Caco-2 (cell line): ENCODE measurements at regions of chr19 and their contacts with region 1.

Region 1: GRCh38 chr19:49640113-49640898 is at the start of gene RRAS:
- DNase-seq: peak; percentile 100
- H3K4me3 ChIP-seq: peak within 1 kb of the TSS; percentile 59
- H3K4me3 Mint-ChIP-seq: peak within 1 kb of the TSS; percentile 91
- H3K27ac Mint-ChIP-seq: peak within 1 kb of the TSS; percentile 100
- H3K4me1 ChIP-seq: peaks cover 7% of the 10 kb centered on the region
- H3K4me1 Mint-ChIP-seq: peaks cover 43% of the 10 kb centered on the region
- H3K27me3 ChIP-seq: no peaks in the 10 kb centered on the region
- H3K27me3 Mint-ChIP-seq: no peaks in the 10 kb centered on the region
- CTCF ChIP-seq: no peak
- total RNA-seq, gene RRAS: 10.6 and 11.3 TPM in 2 replicates

Region 2: DNA sequence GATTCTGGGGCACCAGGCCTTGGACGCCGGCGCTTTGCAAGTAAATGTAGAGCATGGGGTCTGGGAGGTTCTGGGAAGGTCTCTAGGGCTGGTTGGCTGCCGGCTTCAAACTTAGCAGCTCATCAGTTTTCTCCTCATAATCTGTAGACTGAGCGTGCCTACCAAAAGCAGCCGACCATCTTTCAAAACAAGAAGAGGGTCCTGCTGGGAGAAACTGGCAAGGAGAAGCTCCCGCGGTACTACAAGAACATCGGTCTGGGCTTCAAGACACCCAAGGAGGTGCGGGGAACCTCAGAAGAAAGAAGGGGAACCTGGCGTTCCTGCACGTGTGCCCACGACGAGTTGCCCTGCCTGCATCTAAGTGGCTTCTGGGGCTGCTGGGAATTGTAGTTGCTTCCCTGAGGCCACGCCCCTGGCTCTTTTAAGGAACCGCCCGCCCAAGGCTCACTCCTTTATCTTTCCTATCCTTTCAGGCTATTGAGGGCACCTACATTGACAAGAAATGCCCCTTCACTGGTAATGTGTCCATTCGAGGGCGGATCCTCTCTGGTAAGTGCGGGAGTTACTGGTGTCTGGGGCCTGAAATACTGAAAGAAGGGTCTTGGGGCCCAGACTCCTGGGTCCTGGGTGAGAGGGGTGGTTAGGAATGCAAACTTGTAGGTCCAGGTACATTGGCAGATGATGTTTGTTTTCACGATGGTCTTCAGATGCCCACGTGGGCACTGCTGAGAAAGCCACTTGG is 143.1 kb before region 1 on chr19:
- CTCF ChIA-PET with region 1: interaction called, 3 read pairs
- POLR2A ChIA-PET with region 1: interaction called, 22 read pairs
- intact Hi-C with region 1: loop called (anchors 1 kb)
- DNase-seq: peak in 1 of 2 experiments; percentile 62
- H3K4me3 ChIP-seq: peak overlapping the region; percentile 93
- H3K4me3 Mint-ChIP-seq: peak overlapping the region; percentile 98
- H3K27ac Mint-ChIP-seq: peak overlapping the region; percentile 99
- H3K4me1 ChIP-seq: peaks cover 20% of the 10 kb centered on the region
- H3K4me1 Mint-ChIP-seq: peaks cover 13% of the 10 kb centered on the region
- H3K27me3 ChIP-seq: no peaks in the 10 kb centered on the region
- H3K27me3 Mint-ChIP-seq: no peaks in the 10 kb centered on the region
- CTCF ChIP-seq: no peak

Region 3: GRCh38 chr19:49590071-49590970 is 50.0 kb before region 1 on chr19:
- CTCF ChIA-PET with region 1: interaction called, 9 read pairs
- POLR2A ChIA-PET with region 1: interaction called, 18 read pairs
- intact Hi-C with region 1: loop called (anchors 1 kb)
- DNase-seq: peak; percentile 99
- H3K4me3 ChIP-seq: peak overlapping the region; percentile 99
- H3K4me3 Mint-ChIP-seq: peak overlapping the region; percentile 74
- H3K27ac Mint-ChIP-seq: peak overlapping the region; percentile 82
- H3K4me1 ChIP-seq: peaks cover 10% of the 10 kb centered on the region
- H3K4me1 Mint-ChIP-seq: peaks cover 29% of the 10 kb centered on the region
- H3K27me3 ChIP-seq: no peaks in the 10 kb centered on the region
- H3K27me3 Mint-ChIP-seq: no peaks in the 10 kb centered on the region
- CTCF ChIP-seq: no peak

Region 4: GRCh38 chr19:49665351-49666119 is 25.2 kb after region 1 on chr19 and contains the starts of genes BCL2L12 and IRF3:
- CTCF ChIA-PET with region 1: interaction called, 11 read pairs
- POLR2A ChIA-PET with region 1: interaction called, 24 read pairs
- intact Hi-C with region 1: loop called (anchors 1 kb)
- DNase-seq: peak; percentile 97 to 98
- H3K4me3 ChIP-seq: peak within 1 kb of the TSS; percentile 86
- H3K4me3 Mint-ChIP-seq: peak within 1 kb of the TSS; percentile 93
- H3K27ac Mint-ChIP-seq: peak within 1 kb of the TSS; percentile 89
- H3K4me1 ChIP-seq: peaks cover 13% of the 10 kb centered on the region; the same call in 1 of the 2 replicates
- H3K4me1 Mint-ChIP-seq: peaks cover 18% of the 10 kb centered on the region
- H3K27me3 ChIP-seq: no peaks in the 10 kb centered on the region
- H3K27me3 Mint-ChIP-seq: no peaks in the 10 kb centered on the region
- CTCF ChIP-seq: no peak
- total RNA-seq, gene BCL2L12: 103 and 111 TPM in 2 replicates
- total RNA-seq, gene IRF3: 125 and 131 TPM in 2 replicates

Region 5: GRCh38 chr19:49877020-49877878 is 236.9 kb after region 1 on chr19 and contains the starts of genes AKT1S1 and TBC1D17:
- CTCF ChIA-PET with region 1: no interaction called
- POLR2A ChIA-PET with region 1: interaction called, 5 read pairs
- intact Hi-C with region 1: loop called (anchors 1 kb)
- DNase-seq: peak; percentile 99 to 100
- H3K4me3 ChIP-seq: peak within 1 kb of the TSS; percentile 87
- H3K4me3 Mint-ChIP-seq: no peak within 1 kb of the TSS
- H3K27ac Mint-ChIP-seq: no peak within 1 kb of the TSS
- H3K4me1 ChIP-seq: peaks cover 9% of the 10 kb centered on the region; the same call in 1 of the 2 replicates
- H3K4me1 Mint-ChIP-seq: no peaks in the 10 kb centered on the region
- H3K27me3 ChIP-seq: no peaks in the 10 kb centered on the region
- H3K27me3 Mint-ChIP-seq: no peaks in the 10 kb centered on the region
- CTCF ChIP-seq: no peak
- total RNA-seq, gene AKT1S1: 64.6 and 77.6 TPM in 2 replicates
- total RNA-seq, gene TBC1D17: 55.3 and 56.5 TPM in 2 replicates